Sciatic nerve (tissue), 2 donors: ENCODE measurements at regions of chr1 and their contacts with region 1.

Region 1: GRCh38 chr1:36134505-36135329 is 9.7 kb upstream of the COL8A2 start:
- DNase-seq: peak; percentile 82
- ATAC-seq: peak; percentile 88

Region 2: DNA sequence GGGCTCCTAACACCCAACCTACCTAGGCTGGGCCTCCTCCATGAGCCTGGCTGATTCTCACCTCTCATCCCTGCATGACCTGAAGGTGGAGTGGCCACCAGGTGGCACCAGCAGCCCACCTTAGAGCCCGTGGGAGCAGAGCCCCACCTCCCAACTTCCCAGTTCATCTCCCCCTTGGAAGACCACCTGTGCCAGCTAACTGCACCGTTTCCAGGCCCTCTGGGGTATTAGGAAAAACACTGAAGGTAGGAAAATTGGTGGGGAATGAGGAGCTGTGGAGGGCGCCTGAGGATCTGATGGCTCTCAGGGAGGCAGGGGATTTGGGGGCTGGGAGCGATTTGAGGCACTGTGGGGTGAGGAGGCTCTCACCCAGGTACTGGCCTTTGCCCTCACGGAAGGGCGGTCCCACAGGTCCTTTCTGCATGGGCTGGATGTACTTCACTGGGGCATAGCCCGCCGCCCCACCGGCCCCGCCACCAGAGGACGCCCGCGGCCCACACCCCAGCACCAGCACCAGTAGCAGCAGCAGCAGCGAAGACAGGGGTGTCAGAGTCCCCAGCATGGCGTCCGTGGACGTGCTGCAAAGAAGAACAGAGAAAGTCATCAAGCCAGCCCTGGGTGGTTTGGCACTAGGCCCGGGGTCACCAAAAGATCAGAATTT is 34.9 kb before region 1 on chr1:
- intact Hi-C with region 1: loop called (anchors 5 kb)
- DNase-seq: peak; percentile 91
- ATAC-seq: peak; percentile 85

Region 3: GRCh38 chr1:36342481-36343478 is 208.1 kb after region 1 on chr1:
- intact Hi-C with region 1: no loop called
- DNase-seq: no peak
- ATAC-seq: peak; percentile 82